Activated CD4-positive, alpha-beta T cell treated with anti-CD3 and anti-CD28 coated beads, Interleukin-2, amount 10 ng/mL, durations not matched to agents 24 days and 14 days (primary cell): ENCODE measurements at regions of chr6 and their contacts with region 1.

Region 1: GRCh38 chr6:30066577-30067459 is at the start of gene PPP1R11:
- DNase-seq: peak; percentile 99
- H3K4me3 Mint-ChIP-seq: peak within 1 kb of the TSS; percentile 93
- H3K27ac Mint-ChIP-seq: peak within 1 kb of the TSS; percentile 99
- H3K4me1 Mint-ChIP-seq: peaks cover 45% of the 10 kb centered on the region
- H3K27me3 Mint-ChIP-seq: peaks cover 16% of the 10 kb centered on the region
- total RNA-seq, gene PPP1R11: 60.9 and 61.1 TPM in 2 replicates

Region 2: DNA sequence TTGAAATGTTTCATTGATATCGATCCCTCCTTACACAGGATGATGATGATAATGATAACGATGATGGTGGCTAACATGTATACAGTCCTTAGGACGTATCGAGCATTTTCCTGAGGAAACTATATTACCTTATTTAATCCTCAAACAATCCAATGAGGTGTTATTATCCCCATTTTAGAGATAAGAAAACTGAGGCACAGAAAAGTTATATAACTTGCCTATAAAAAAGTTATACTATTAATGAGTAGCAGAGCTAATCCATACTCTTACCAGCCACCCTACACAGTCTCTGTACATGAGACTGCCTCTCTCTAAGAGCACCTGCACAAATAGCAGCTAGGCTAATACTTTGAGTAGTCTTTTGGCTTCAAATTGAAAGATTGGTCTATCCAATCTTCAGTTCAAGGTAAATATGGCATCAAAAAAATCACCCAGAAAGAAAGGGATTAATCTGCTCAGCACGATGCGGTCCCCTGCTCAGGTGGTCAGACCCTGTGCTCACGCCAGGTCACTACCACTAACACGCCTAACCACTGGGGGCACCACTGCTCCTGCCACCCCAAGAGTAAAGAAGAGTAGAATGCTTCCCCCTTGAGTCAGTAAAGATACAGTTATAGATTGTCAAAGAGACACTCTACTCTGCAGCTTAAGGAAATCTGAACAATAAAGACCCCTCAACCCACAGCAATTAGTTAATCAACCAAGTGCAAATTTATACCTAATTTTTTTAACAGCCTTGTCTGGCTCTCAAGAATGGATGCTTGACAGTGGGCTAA is 448.8 kb before region 1 on chr6:
- intact Hi-C with region 1: no loop called
- DNase-seq: no peak
- H3K4me3 Mint-ChIP-seq: no peak overlapping the region
- H3K27ac Mint-ChIP-seq: no peak overlapping the region
- H3K4me1 Mint-ChIP-seq: no peaks in the 10 kb centered on the region
- H3K27me3 Mint-ChIP-seq: no peaks in the 10 kb centered on the region

Region 3: GRCh38 chr6:29723262-29723665 is 343.6 kb before region 1 on chr6 and contains the start of gene HLA-F:
- intact Hi-C with region 1: loop called (anchors 10 kb)
- DNase-seq: peak; percentile 96
- H3K4me3 Mint-ChIP-seq: peak within 1 kb of the TSS; percentile 98
- H3K27ac Mint-ChIP-seq: peak within 1 kb of the TSS; percentile 94
- H3K4me1 Mint-ChIP-seq: peaks cover 53% of the 10 kb centered on the region
- H3K27me3 Mint-ChIP-seq: no peaks in the 10 kb centered on the region
- total RNA-seq, gene HLA-F: 254 and 270 TPM in 2 replicates

Region 4: GRCh38 chr6:30169658-30170614 is 103.1 kb after region 1 on chr6:
- intact Hi-C with region 1: loop called (anchors 1 kb)
- DNase-seq: peak; percentile 81
- H3K4me3 Mint-ChIP-seq: no peak overlapping the region
- H3K27ac Mint-ChIP-seq: no peak overlapping the region
- H3K4me1 Mint-ChIP-seq: peaks cover 29% of the 10 kb centered on the region
- H3K27me3 Mint-ChIP-seq: peaks cover 30% of the 10 kb centered on the region